IMR-90 (cell line): ENCODE measurements at regions of chr6 and their contacts with region 1.

Region 1: GRCh38 chr6:31366693-31367470 is 9.9 kb upstream of the HLA-B start:
- DNase-seq: peak; percentile 86
- ATAC-seq: peak; percentile 100
- H3K4me3 ChIP-seq: no peak overlapping the region
- H3K27ac ChIP-seq: no peak overlapping the region
- H3K4me1 ChIP-seq: no peaks in the 10 kb centered on the region
- H3K27me3 ChIP-seq: peaks cover 31% of the 10 kb centered on the region
- CTCF ChIP-seq: peak; percentile 98
- POLR2A ChIP-seq: 0 out of 2 replicates have a peak, but pooled peaks have one; percentile 43
- RAD21 ChIP-seq: peak; percentile 97

Region 2: GRCh38 chr6:31139599-31139998 is 227.3 kb before region 1 on chr6:
- CTCF ChIA-PET with region 1: interaction called, 3 read pairs
- POLR2A ChIA-PET with region 1: no interaction called
- dilution Hi-C with region 1: no loop called
- in situ Hi-C with region 1: loop called (anchors 5 kb)
- intact Hi-C with region 1: loop called (anchors 2 kb)
- DNase-seq: peak; percentile 46
- ATAC-seq: peak; percentile 25
- H3K4me3 ChIP-seq: no peak overlapping the region
- H3K27ac ChIP-seq: no peak overlapping the region
- H3K4me1 ChIP-seq: peaks cover 13% of the 10 kb centered on the region
- H3K27me3 ChIP-seq: no peaks in the 10 kb centered on the region
- CTCF ChIP-seq: no peak
- POLR2A ChIP-seq: no peak
- RAD21 ChIP-seq: no peak

Region 3: DNA sequence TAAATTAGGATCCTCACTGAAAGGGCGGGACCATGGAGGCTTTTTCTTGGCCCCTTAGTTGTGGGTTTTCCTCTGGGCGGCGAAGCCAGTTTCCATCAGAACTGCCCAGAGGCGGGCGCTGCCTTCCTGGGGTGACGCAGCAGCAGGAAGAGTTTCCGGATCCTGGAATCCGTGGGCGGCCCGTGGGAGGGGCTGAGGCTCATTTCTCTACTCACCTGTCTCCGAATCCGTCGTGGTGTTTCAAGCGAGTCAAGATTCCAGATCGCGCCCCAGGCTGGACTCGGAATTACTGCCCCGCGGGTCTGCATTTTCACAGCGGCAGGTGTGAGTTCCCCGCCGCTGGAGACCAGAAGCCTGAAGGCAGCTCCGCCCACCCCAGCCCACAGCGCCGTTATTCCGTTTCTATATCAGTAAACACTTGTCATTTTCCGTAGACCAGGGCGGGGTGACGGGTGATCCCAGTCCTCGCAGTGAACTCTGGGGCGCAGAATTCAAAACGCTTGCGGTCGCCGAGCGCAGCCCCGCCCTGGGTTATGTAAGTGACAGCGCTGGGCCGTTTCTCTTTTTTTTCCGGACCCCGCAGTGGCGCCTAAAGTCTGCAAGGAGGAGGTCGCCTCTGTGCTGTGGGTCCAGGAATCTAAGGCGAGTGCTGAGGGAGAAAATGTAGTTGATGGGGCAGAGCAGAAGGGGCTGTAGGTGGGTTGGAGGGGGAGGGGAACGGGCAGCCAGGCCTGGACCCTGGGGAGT is 169.2 kb before region 1 on chr6:
- CTCF ChIA-PET with region 1: interaction called, 6 read pairs
- POLR2A ChIA-PET with region 1: no interaction called
- dilution Hi-C with region 1: no loop called
- in situ Hi-C with region 1: loop called (anchors 5 kb)
- intact Hi-C with region 1: loop called (anchors 1 kb)
- DNase-seq: peak; percentile 72
- ATAC-seq: peak; percentile 90
- H3K4me3 ChIP-seq: peak overlapping the region; percentile 91
- H3K27ac ChIP-seq: peak overlapping the region; percentile 87
- H3K4me1 ChIP-seq: peaks cover under 1% of the 10 kb centered on the region; the same call in 1 of the 2 replicates
- H3K27me3 ChIP-seq: no peaks in the 10 kb centered on the region
- CTCF ChIP-seq: no peak
- POLR2A ChIP-seq: peak; percentile 59; the same call in 1 of the 2 replicates
- RAD21 ChIP-seq: no peak

Region 4: GRCh38 chr6:31381666-31382065 is 14.8 kb after region 1 on chr6:
- CTCF ChIA-PET with region 1: interaction called, 10 read pairs
- POLR2A ChIA-PET with region 1: no interaction called
- dilution Hi-C with region 1: no loop called
- in situ Hi-C with region 1: no loop called
- intact Hi-C with region 1: no loop called
- DNase-seq: no peak
- ATAC-seq: no peak
- H3K4me3 ChIP-seq: no peak overlapping the region
- H3K27ac ChIP-seq: no peak overlapping the region
- H3K4me1 ChIP-seq: no peaks in the 10 kb centered on the region
- H3K27me3 ChIP-seq: peaks cover 41% of the 10 kb centered on the region
- CTCF ChIP-seq: no peak
- POLR2A ChIP-seq: no peak
- RAD21 ChIP-seq: no peak